ENCODE measurements at regions of chr7 and their contacts with region 1.

Region 1: DNA sequence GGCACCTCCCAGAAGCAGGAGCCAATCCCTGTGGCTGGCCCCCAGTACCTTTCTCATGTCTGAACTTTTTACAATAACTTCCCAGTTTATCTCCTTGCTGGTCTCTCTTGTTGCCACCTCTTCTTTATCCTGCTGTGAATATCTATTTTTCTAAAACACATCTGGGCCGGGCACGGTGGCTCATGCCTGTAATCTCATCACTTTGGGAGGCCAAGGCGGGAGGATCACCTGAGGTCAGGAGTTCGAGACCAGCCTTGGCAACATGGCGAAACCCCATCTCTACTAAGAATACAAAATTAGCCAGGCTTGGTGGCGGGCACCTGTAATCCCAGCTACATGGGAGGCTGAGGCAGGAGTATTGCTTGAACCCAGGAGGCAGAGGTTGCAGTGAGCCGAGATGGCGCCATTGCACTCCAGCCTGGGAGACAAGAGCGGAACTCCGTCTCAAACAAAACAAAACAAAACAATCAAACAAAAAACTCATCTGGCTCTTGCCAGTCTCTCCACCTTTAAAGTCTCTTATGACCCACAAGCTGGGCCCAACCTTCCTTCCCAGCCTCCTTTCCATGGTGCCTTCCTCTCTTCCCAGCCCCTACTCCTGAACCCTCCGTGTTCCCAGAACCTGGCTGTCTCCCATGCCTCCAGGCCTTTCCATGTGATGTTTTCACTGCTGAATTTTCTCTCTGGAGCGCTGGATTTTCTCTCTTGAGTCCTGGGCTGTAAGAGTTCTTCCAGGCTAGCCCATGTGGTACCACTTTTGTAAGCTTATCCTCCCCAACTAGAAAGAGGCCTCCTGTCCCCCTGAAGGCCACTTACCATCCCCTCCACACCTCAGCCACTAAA is 51.3 kb downstream of the HIP1 start:
- DNase-seq: no peak
- ATAC-seq: no peak
- H3K4me3 ChIP-seq: no peak overlapping the region
- H3K4me3 Mint-ChIP-seq: no peak overlapping the region
- H3K27ac ChIP-seq: no peak overlapping the region
- H3K27ac Mint-ChIP-seq: no peak overlapping the region
- H3K4me1 ChIP-seq: peaks cover 0 to 2% of the 10 kb centered on the region in 2 experiments
- H3K4me1 Mint-ChIP-seq: peaks cover 0 to 5% (median 0%) of the 10 kb centered on the region in 3 donors
- H3K27me3 ChIP-seq: peaks cover 0 to 17% of the 10 kb centered on the region in 2 experiments
- H3K27me3 Mint-ChIP-seq: peaks cover 6 to 9% of the 10 kb centered on the region in 2 donors

Region 2: DNA sequence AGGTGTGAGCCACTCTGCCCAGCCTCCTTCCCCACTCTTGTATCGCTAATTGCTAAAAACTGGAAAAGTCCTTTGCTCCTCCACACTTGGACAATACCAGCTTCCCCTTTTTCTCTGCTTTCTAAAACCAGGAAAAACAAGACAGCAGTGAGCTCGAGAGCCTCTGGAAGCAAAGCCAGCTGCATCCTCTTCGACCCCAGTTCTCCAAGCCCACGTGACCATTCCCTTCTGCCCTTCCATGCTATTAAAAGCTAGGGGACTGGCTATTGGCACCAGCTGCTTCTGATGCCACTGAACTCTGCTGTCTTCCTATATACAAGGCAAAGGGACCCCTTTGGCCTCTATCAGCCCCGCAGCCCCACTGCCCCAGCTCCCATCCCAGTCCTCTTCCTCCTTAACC is 103.1 kb before region 1 on chr7:
- CTCF ChIA-PET with region 1: no interaction called
- POLR2A ChIA-PET with region 1: no interaction called
- DNase-seq: no peak
- ATAC-seq: no peak
- H3K4me3 ChIP-seq: no peak overlapping the region
- H3K4me3 Mint-ChIP-seq: no peak overlapping the region
- H3K27ac ChIP-seq: no peak overlapping the region
- H3K27ac Mint-ChIP-seq: no peak overlapping the region
- H3K4me1 ChIP-seq: no peaks in the 10 kb centered on the region
- H3K4me1 Mint-ChIP-seq: no peaks in the 10 kb centered on the region
- H3K27me3 ChIP-seq: no peaks in the 10 kb centered on the region
- H3K27me3 Mint-ChIP-seq: no peaks in the 10 kb centered on the region

Region 3: DNA sequence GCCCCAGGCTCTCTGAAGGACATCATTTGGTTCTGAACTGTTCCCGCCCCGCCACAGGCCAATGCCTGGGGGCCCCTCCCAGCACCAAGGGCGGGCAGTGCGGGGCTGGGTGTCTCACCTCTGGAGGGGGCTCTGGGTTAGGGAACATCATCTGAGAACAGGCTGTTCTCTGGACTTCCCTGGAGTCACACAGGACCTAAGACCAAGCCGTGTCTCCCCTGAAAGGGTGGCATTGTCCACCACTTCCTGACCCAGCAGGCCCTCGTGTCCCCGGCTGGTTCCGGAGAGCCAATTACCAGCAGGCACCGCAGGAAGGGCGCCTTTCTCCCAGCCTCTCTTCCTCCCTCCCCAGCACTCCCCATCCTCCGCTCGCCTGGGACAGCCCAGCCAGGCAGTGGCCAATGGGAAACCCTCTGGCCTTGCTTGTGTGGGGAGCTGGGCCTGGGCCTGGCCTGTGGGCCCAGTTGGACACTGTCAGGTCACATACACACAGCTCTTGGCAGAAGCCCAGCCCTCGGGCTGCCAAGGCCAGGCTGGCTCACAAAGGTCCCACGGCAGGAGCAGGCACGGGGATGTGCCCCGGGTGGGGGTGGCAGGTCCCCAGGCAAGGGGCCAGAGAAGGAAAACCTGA is 75.8 kb before region 1 on chr7:
- CTCF ChIA-PET with region 1: interaction called in 1 of 2 experiments, 10 read pairs
- POLR2A ChIA-PET with region 1: no interaction called
- DNase-seq: no peak
- ATAC-seq: no peak
- H3K4me3 ChIP-seq: no peak overlapping the region
- H3K4me3 Mint-ChIP-seq: no peak overlapping the region
- H3K27ac ChIP-seq: no peak overlapping the region
- H3K27ac Mint-ChIP-seq: no peak overlapping the region
- H3K4me1 ChIP-seq: peaks cover 2 to 4% of the 10 kb centered on the region in 2 experiments
- H3K4me1 Mint-ChIP-seq: peaks cover 2 to 6% (median 2%) of the 10 kb centered on the region in 3 donors
- H3K27me3 ChIP-seq: no peaks in the 10 kb centered on the region
- H3K27me3 Mint-ChIP-seq: no peaks in the 10 kb centered on the region

Region 4: GRCh38 chr7:75702515-75702914 is 15.0 kb after region 1 on chr7:
- CTCF ChIA-PET with region 1: no interaction called
- POLR2A ChIA-PET with region 1: no interaction called
- DNase-seq: no peak
- ATAC-seq: no peak
- H3K4me3 ChIP-seq: no peak overlapping the region
- H3K4me3 Mint-ChIP-seq: no peak overlapping the region
- H3K27ac ChIP-seq: no peak overlapping the region
- H3K27ac Mint-ChIP-seq: no peak overlapping the region
- H3K4me1 ChIP-seq: no peaks in the 10 kb centered on the region
- H3K4me1 Mint-ChIP-seq: no peaks in the 10 kb centered on the region
- H3K27me3 ChIP-seq: no peaks in the 10 kb centered on the region
- H3K27me3 Mint-ChIP-seq: no peaks in the 10 kb centered on the region